Common myeloid progenitor, CD34-positive (primary cell): ENCODE measurements at regions of chr12 and their contacts with region 1.

Region 1: DNA sequence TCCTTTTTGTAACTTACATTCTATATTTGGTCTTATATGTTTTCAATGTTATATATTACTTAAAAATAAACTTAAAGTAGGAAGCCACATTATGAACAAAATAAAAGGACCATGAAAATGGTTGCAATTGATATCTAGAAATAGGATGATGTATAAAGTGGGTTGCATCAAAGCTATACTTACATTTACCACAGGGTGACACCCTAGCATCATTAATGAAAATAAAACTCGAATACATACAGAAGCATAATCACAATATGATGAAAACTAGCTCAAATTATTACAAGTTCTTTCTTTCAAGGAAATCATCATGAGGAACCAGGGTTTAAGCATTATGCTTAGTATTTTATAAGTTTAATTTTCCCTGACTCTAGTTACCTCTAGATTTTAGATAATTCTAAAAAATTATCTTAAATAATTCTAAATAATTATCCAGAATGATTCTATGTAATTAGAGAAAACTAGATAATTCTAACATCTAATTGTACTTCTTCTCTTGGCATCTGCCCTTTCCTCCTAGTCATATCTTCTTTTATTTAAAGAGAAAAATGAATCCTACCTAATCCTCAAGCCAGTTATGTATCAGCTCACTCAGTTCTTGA is 31.2 kb downstream of the TAS2R7 start:
- DNase-seq: peak; percentile 46 to 76 (median 65)
- H3K4me3 ChIP-seq: no peak overlapping the region
- H3K27ac ChIP-seq: no peak overlapping the region
- H3K4me1 ChIP-seq: no peaks in the 10 kb centered on the region
- H3K27me3 ChIP-seq: peaks cover 0 to 4% (median 2%) of the 10 kb centered on the region in 5 experiments

Region 2: GRCh38 chr12:10847744-10848143 is 76.5 kb after region 1 on chr12:
- CTCF ChIA-PET with region 1: no interaction called
- POLR2A ChIA-PET with region 1: no interaction called
- DNase-seq: no peak
- H3K4me3 ChIP-seq: no peak overlapping the region
- H3K27ac ChIP-seq: no peak overlapping the region
- H3K4me1 ChIP-seq: peaks cover 0 to 10% (median 0%) of the 10 kb centered on the region in 4 experiments
- H3K27me3 ChIP-seq: no peaks in the 10 kb centered on the region

Region 3: GRCh38 chr12:11202811-11203210 is 431.6 kb after region 1 on chr12:
- CTCF ChIA-PET with region 1: interaction called, 87 read pairs
- POLR2A ChIA-PET with region 1: no interaction called
- DNase-seq: no peak
- H3K4me3 ChIP-seq: no peak overlapping the region
- H3K27ac ChIP-seq: no peak overlapping the region
- H3K4me1 ChIP-seq: no peaks in the 10 kb centered on the region
- H3K27me3 ChIP-seq: no peaks in the 10 kb centered on the region